Endothelial cell of umbilical vein (primary cell): ENCODE measurements at regions of chr22 and their contacts with region 1.

Region 1: GRCh38 chr22:46845296-46846149 is 83.1 kb downstream of the TBC1D22A start:
- DNase-seq: peak; percentile 76
- H3K4me3 ChIP-seq: peak overlapping the region in 2 of 3 experiments; percentile 14 to 61
- H3K27ac ChIP-seq: peak overlapping the region; percentile 14
- H3K4me1 ChIP-seq: peaks cover 16% of the 10 kb centered on the region
- H3K27me3 ChIP-seq: no peaks in the 10 kb centered on the region
- CTCF ChIP-seq: peak; percentile 22 to 44
- POLR2A ChIP-seq: no peak

Region 2: DNA sequence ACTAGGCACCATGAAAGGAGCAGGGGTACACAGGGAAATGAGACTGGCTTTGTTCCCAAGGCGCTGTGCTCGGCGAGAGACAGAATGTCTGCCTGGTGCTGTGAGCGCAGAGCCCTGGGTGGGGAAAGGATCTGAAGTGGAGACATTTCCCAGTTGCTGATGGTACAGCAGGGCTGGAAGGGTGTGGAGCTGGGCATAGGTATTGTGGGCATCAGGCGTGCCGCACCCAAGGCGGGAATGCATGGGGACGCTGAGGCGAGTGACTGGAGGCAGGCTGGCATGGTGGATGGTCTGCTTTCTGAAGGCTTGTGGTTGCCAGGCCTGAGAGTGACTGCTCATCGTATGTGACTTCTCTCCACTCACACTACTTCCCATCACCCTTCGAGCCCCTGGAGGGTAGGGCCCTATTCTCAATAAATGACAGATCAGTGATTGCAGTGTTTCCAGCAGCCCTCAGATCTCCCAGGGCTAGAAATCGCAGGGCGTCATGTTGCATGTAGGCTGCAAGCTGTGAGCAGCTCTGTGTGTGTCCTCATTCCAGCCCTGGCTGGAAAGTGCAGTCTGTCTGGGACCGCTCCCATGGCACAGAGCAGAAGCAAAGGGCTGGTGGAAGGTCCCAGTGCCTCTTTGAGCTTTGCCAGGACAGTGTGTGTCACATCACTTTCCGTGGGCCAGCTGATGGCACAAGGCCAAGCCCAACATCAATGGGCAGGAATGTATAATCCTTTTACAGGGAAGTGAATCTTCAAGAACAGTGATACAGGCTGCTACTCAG is 15.4 kb before region 1 on chr22:
- CTCF ChIA-PET with region 1: interaction called, 34 read pairs
- POLR2A ChIA-PET with region 1: no interaction called
- dilution Hi-C with region 1: no loop called
- intact Hi-C with region 1: loop called (anchors 1 kb)
- DNase-seq: peak; percentile 55
- H3K4me3 ChIP-seq: no peak overlapping the region
- H3K27ac ChIP-seq: peak overlapping the region; percentile 44
- H3K4me1 ChIP-seq: peaks cover 33% of the 10 kb centered on the region
- H3K27me3 ChIP-seq: no peaks in the 10 kb centered on the region
- CTCF ChIP-seq: no peak
- POLR2A ChIP-seq: no peak

Region 3: DNA sequence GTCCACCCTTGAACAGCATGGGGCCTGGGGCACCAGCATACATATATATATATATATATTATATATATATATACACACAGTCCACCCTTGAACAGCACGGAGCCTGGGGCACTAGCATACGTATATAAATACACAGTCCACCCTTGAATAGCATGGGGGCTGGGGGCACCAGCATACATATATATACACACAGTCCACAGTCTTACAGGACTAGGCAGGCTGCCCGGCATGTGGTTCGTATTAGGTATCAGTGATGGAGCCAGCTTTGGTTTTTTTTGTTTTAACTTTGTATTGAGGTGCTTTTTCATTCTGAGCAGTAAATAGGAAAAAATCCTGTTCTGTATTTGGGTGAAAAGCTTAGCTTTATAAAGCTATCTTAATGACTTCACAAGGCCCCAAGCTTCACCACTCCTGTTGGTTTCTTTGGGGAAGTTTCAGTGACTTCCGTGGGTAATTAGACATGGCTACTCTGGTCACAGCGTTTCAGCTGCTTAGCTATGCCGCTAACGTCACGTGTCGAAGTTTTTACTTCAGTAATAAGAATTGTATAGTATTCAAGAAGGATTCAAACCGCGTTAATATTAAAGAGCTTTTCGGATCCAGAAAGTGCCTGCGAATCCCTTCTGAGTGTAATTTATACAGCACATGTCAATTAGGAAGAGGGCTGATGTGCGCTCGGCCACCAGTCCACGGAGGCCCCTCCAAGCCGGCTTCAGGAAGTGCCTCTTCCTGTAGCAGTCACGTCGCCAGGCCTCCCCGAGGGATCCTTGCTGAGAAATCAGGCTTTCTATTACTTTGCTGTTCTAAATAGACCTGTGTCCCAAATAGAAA is 96.7 kb after region 1 on chr22:
- CTCF ChIA-PET with region 1: interaction called, 10 read pairs
- POLR2A ChIA-PET with region 1: no interaction called
- dilution Hi-C with region 1: no loop called
- intact Hi-C with region 1: loop called (anchors 5 kb)
- DNase-seq: no peak
- H3K4me3 ChIP-seq: no peak overlapping the region
- H3K27ac ChIP-seq: peak overlapping the region; percentile 83
- H3K4me1 ChIP-seq: peaks cover 13% of the 10 kb centered on the region
- H3K27me3 ChIP-seq: no peaks in the 10 kb centered on the region
- CTCF ChIP-seq: no peak
- POLR2A ChIP-seq: no peak

Region 4: GRCh38 chr22:47012589-47013411 is 167.3 kb after region 1 on chr22:
- CTCF ChIA-PET with region 1: interaction called, 18 read pairs
- POLR2A ChIA-PET with region 1: no interaction called
- dilution Hi-C with region 1: no loop called
- intact Hi-C with region 1: no loop called
- DNase-seq: no peak
- H3K4me3 ChIP-seq: no peak overlapping the region
- H3K27ac ChIP-seq: no peak overlapping the region
- H3K4me1 ChIP-seq: no peaks in the 10 kb centered on the region
- H3K27me3 ChIP-seq: no peaks in the 10 kb centered on the region
- CTCF ChIP-seq: peak in 1 of 2 donors; percentile 20
- POLR2A ChIP-seq: no peak

Region 5: GRCh38 chr22:48492366-48493320 is 1647.1 kb after region 1 on chr22:
- CTCF ChIA-PET with region 1: interaction called, 82 read pairs
- POLR2A ChIA-PET with region 1: no interaction called
- dilution Hi-C with region 1: no loop called
- intact Hi-C with region 1: loop called (anchors 2 kb)
- DNase-seq: peak; percentile 66
- H3K4me3 ChIP-seq: no peak overlapping the region
- H3K27ac ChIP-seq: no peak overlapping the region
- H3K4me1 ChIP-seq: no peaks in the 10 kb centered on the region
- H3K27me3 ChIP-seq: peaks cover 22 to 29% of the 10 kb centered on the region in 2 experiments
- CTCF ChIP-seq: peak; percentile 67 to 78
- POLR2A ChIP-seq: no peak